Sciatic nerve (tissue), 2 donors: ENCODE measurements at regions of chr11 and their contacts with region 1.

Region 1: DNA sequence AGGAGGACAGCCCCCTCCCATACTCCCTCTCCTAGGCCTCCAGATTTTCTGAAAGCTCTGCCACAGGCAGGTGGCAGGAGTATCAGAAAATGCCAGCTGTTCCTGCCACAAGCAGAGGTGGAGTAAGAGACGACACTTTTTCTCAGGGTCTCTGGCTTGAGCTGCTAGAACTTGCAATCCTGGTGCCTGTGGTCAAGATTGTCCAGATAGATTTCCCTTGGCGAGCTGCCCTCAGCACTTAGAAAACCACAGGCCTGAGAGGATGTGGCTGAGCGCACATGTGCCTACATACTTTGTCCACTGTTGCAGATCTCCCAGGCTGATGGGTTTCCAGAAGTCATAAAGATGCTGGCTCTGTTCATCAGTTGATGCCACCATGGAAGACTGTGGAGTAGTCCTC is 65.7 kb upstream of the NAV2 start:
- DNase-seq: peak; percentile 63
- ATAC-seq: peak; percentile 56

Region 2: GRCh38 chr11:19101796-19102520 is 545.0 kb before region 1 on chr11:
- intact Hi-C with region 1: loop called (anchors 5 kb)
- DNase-seq: no peak
- ATAC-seq: no peak

Region 3: GRCh38 chr11:19587979-19588378 is 58.9 kb before region 1 on chr11:
- intact Hi-C with region 1: loop called (anchors 2 kb)
- DNase-seq: no peak
- ATAC-seq: no peak